ENCODE measurements at regions of chr9 and their contacts with region 1.

Region 1: DNA sequence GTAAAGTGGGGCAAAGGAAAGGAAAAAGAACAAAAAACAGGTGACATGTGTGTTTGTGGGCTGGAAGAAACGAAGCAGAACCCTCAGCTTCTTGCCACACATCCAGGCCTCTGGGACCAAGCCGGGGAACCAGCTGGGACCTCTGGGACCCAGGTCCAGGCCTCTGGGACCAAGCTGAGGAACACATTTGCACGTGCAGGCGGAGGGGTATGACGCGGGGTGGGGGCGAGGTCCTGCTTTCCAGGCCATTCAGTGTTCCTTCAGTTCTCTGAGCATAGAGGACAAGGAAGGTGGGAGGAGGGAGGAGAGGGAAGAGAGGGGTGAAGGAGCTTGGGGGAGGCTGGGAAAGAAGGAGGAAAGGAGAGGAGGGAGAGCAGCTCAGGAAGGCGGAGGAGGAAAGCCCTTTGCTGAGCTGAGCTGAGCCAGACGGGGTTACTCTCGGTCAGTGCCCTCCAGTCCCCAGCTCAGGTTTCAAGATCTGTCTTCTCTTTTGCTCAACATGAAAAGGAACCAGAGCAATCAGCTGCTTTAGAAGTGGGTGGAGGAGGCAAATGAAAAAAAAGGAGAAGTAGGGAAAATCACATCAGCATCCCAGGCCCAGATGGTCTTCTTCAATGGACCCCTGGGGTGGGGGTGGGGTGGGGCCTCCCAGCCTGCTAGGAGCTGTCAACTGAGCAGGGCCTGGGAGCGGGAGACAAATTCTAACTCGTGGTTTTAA is 59.1 kb downstream of the ABCA1 start:
- DNase-seq: peak; percentile 88
- H3K4me3 ChIP-seq: no peak overlapping the region
- H3K27ac ChIP-seq: peak overlapping the region; percentile 51 to 76
- H3K4me1 ChIP-seq: peaks cover 52% of the 10 kb centered on the region
- H3K27me3 ChIP-seq: no peaks in the 10 kb centered on the region
- CTCF ChIP-seq: no peak
- POLR2A ChIP-seq: no peak

Region 2: DNA sequence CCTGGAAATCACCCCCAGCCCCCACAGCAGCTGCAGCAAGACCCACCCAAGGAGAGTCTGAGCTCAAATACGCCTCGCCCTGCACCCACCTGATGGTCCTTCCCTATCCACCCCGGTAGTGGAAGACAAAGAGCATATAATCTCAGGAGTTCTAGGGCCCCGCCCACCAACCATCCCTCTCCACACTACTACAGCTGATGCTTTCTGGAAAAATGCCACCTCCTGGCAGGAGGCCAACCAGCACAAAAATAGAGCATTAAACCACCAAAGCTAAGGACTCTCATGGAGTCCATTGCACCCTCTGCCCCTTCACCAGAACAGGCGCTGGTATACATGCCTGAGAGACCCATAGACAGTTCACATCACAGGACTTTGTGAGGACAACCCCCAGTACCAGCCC is 143.8 kb before region 1 on chr9:
- intact Hi-C with region 1: no loop called
- DNase-seq: no peak
- H3K4me3 ChIP-seq: no peak overlapping the region
- H3K27ac ChIP-seq: no peak overlapping the region
- H3K4me1 ChIP-seq: peaks cover 4% of the 10 kb centered on the region
- H3K27me3 ChIP-seq: no peaks in the 10 kb centered on the region
- CTCF ChIP-seq: no peak
- POLR2A ChIP-seq: no peak

Region 3: GRCh38 chr9:104934691-104935500 is 66.0 kb after region 1 on chr9:
- intact Hi-C with region 1: no loop called
- DNase-seq: no peak
- H3K4me3 ChIP-seq: no peak overlapping the region
- H3K27ac ChIP-seq: no peak overlapping the region
- H3K4me1 ChIP-seq: no peaks in the 10 kb centered on the region
- H3K27me3 ChIP-seq: no peaks in the 10 kb centered on the region
- CTCF ChIP-seq: no peak
- POLR2A ChIP-seq: no peak

Region 4: DNA sequence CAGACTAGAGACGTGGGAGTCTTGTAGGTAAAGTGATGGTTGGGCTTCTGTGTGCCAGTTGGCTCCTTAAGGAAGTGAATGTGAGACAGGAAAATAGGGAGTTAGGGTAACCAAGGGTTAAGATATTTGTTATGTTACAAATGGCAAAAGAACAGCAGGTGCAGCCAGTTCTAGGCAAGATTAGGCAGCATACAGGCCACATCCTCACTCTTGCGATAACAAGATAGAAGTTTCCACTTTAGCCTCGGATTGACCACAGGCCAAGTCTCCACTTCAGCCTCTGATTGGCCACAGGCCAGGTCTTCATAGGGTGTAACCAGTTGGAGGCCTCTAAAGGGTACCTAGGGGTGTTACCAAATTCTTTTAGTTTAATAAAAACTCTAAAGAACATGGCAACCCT is 113.7 kb after region 1 on chr9:
- intact Hi-C with region 1: no loop called
- DNase-seq: peak; percentile 70
- H3K4me3 ChIP-seq: no peak overlapping the region
- H3K27ac ChIP-seq: peak overlapping the region in 1 of 2 donors; percentile 42
- H3K4me1 ChIP-seq: peaks cover 23% of the 10 kb centered on the region
- H3K27me3 ChIP-seq: no peaks in the 10 kb centered on the region
- CTCF ChIP-seq: no peak
- POLR2A ChIP-seq: no peak

Region 5: DNA sequence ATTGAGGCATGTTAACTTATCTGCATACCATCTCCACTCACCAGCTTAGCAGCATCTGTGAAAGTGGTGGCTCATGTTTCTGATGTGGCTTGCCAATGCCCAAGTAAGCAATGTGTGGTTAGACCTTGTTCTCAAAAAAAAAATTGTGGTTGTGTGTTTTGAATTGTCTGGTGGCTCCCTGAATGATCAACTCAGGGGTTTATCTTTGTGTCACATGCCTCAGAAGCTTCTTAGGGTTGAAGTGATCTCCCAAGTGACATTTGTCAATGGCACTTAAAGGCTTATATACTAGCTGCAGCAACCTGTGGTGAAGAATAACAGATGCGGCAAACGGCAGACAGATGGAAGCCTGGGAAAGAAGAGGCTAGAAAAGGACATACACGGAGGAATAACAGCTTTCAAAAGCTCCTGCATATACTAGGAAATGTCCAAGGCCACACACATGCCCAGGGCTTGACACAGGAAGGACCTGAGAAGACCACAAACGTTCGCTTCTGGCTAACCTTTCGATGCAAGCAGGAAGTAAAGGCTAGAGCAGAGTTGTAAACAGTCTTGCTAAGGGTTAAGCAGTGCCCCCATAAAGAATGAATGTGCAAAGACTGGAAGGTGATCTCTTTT is 536.8 kb after region 1 on chr9:
- intact Hi-C with region 1: loop called (anchors 5 kb)
- DNase-seq: no peak
- H3K4me3 ChIP-seq: no peak overlapping the region
- H3K27ac ChIP-seq: no peak overlapping the region
- H3K4me1 ChIP-seq: no peaks in the 10 kb centered on the region
- H3K27me3 ChIP-seq: no peaks in the 10 kb centered on the region
- CTCF ChIP-seq: no peak
- POLR2A ChIP-seq: no peak

Measured in testis (tissue), 5 donors.